ENCODE measurements at regions of chr3 and their contacts with region 1.

Region 1: DNA sequence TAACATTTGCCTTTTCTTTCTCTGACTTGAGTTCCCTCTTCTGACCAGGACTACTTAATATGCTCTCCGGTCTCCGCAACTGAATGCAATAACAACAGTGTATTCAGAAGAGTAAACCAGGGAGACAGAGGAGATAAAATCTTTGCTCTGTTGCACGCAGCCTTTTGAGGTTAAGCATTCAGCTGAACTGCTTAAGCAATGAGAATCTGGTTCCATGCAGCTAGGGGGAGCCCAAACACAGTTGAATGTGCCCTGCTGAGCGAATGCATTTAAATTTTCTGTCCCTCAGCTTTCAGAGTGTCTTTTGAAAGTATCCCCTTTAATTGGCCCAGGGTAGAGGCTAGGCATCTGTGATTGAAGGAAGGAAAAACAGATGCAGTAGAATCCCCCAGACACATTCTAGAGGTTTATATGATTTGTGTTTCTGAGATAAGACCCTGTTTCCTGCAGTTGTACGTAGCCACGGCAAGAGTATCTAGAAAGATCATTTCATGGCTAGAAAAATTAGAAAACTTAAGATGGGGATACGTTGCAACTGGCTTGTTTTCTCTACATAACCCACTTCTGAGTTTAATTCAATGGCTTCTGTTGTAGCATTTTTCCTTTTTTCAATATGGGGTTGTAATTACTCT is 309.6 kb downstream of the TUSC7 start:
- DNase-seq: peak; percentile 10
- ATAC-seq: peak; percentile 97
- H3K4me3 ChIP-seq: no peak overlapping the region
- H3K27ac ChIP-seq: no peak overlapping the region
- H3K4me1 ChIP-seq: no peaks in the 10 kb centered on the region
- H3K27me3 ChIP-seq: peaks cover 0 to 18% of the 10 kb centered on the region in 2 experiments; a peak in 2 of 5 replicates
- CTCF ChIP-seq: peak; percentile 76
- EP300 ChIP-seq: no peak
- POLR2A ChIP-seq: no peak
- RAD21 ChIP-seq: no peak

Region 2: DNA sequence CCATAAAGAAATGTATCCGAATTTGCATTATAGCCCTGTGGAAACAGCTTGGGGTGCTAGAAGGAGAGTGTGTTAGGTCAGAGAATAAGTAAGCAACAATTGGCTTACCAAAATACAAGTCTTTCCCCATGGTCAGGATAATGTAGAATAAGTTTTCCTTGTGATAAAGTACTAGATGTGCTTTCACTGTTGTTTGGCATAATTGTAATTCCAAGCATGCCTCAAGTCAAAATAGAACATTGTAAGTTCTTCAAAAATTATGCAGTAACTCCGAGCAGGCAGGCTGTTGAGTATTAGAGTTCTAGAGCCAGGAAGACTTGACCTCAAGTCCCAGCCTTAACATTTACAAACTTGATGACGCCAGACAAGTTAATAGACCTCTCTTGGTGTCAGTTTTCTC is 67.6 kb before region 1 on chr3:
- CTCF ChIA-PET with region 1: no interaction called
- POLR2A ChIA-PET with region 1: no interaction called
- in situ Hi-C with region 1: no loop called
- intact Hi-C with region 1: no loop called
- DNase-seq: no peak
- ATAC-seq: no peak
- H3K4me3 ChIP-seq: no peak overlapping the region
- H3K27ac ChIP-seq: no peak overlapping the region
- H3K4me1 ChIP-seq: no peaks in the 10 kb centered on the region
- H3K27me3 ChIP-seq: no peaks in the 10 kb centered on the region
- CTCF ChIP-seq: no peak
- EP300 ChIP-seq: no peak
- POLR2A ChIP-seq: no peak
- RAD21 ChIP-seq: no peak

Region 3: GRCh38 chr3:117719316-117719926 is 700.2 kb after region 1 on chr3:
- CTCF ChIA-PET with region 1: interaction called, 11 read pairs
- POLR2A ChIA-PET with region 1: no interaction called
- in situ Hi-C with region 1: no loop called
- intact Hi-C with region 1: no loop called
- DNase-seq: peak; percentile 8
- ATAC-seq: no peak
- H3K4me3 ChIP-seq: no peak overlapping the region
- H3K27ac ChIP-seq: no peak overlapping the region
- H3K4me1 ChIP-seq: no peaks in the 10 kb centered on the region
- H3K27me3 ChIP-seq: no peaks in the 10 kb centered on the region
- CTCF ChIP-seq: peak; percentile 46
- EP300 ChIP-seq: no peak
- POLR2A ChIP-seq: no peak
- RAD21 ChIP-seq: no peak